Activated T-helper 1 cell treated with anti-CD3 and anti-CD28 coated beads, Interleukin-12 subunit alpha, Interleukin-12 subunit beta, Interleukin-2, Interleukin-4 antibody, amounts not matched to agents 30 ng/mL and 10 ng/mL and 1 ng/mL, durations not matched to agents 14 hours and 24 hours and 36 hours (primary cell): ENCODE measurements at regions of chr20 and their contacts with region 1.

Region 1: DNA sequence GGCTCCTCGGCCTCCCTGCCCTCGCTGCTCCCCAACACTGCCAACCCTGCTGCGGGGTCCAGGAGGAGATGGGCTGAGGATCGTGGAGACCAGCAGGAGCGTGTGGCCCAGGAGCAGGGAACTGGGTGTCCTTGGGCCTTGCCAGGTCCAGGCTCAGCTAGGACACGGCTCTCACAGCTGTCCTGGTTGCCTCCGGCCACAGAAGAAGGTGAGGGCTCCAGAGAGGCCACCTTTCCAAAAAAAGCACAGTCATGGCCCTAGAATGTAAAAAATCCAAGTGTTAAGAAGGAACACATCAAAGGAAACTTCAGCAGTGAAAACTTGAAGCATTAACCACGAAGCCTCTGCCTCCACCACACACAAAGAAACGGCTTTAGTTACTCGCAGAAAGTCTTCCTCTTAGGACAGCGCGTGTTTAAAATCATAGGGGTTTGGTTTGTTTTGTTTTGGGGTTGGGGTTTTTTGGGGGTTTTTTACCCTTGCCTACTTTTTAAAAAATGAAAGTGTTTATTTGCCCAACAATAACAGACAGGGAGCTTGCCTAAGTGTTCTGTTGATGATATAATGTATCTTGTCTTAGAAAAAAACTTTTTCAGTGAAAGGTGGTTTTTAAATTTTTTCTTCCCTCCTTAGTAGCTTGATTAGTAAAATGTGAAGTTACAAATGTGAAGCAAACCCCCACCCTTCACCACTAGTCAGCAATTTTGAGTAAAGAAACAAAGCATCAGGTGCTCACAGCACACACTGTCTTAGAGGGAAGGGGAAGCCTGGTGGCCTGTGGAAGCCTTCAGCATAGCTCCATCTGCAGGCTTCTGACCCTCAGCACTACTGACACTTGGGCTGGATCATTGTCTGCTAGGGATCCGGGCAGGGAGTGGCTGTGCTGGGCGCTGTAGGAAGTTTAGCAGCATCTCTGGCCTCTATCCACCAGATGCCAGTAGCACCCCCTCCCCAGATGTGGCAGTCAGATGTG is 60.0 kb downstream of the PTPN1 start:
- DNase-seq: peak; percentile 47
- H3K4me3 Mint-ChIP-seq: peak overlapping the region; percentile 51
- H3K27ac Mint-ChIP-seq: peak overlapping the region; percentile 87
- H3K4me1 Mint-ChIP-seq: peaks cover 69% of the 10 kb centered on the region
- H3K27me3 Mint-ChIP-seq: no peaks in the 10 kb centered on the region

Region 2: GRCh38 chr20:50478162-50479036 is 91.8 kb before region 1 on chr20:
- intact Hi-C with region 1: loop called (anchors 1 kb)
- DNase-seq: peak; percentile 74
- H3K4me3 Mint-ChIP-seq: no peak overlapping the region
- H3K27ac Mint-ChIP-seq: no peak overlapping the region
- H3K4me1 Mint-ChIP-seq: peaks cover 28% of the 10 kb centered on the region
- H3K27me3 Mint-ChIP-seq: peaks cover 2% of the 10 kb centered on the region

Region 3: DNA sequence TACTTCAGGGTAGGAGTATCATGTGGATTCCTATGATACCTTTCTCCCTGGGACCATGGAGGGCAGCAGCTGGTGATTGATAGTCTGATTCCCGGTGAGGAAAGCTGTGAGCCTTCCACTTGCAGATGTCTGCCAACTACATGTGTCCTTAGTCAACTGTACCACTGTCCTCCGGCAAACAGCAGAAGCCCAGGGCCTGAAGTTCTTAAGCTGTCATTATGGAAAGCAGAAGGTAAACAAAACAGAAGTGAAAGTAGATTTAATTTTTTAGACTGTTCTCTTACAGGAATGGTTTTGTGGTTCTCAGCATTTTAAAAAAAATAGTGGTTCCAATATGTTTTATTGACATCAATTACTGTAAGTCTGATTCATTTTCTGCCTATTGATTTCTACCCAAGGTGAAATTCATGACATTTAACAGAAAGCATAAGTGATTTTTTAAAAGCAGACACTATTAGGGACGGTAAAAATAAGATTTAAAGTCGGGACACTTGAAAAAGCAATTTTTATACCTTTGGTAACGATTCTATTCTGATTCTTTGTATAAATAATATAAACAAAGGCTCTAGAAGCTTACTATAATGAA is 23.3 kb before region 1 on chr20:
- intact Hi-C with region 1: loop called (anchors 1 kb)
- DNase-seq: no peak
- H3K4me3 Mint-ChIP-seq: peak overlapping the region; percentile 81
- H3K27ac Mint-ChIP-seq: peak overlapping the region; percentile 86
- H3K4me1 Mint-ChIP-seq: peaks cover 67% of the 10 kb centered on the region
- H3K27me3 Mint-ChIP-seq: no peaks in the 10 kb centered on the region

Region 4: DNA sequence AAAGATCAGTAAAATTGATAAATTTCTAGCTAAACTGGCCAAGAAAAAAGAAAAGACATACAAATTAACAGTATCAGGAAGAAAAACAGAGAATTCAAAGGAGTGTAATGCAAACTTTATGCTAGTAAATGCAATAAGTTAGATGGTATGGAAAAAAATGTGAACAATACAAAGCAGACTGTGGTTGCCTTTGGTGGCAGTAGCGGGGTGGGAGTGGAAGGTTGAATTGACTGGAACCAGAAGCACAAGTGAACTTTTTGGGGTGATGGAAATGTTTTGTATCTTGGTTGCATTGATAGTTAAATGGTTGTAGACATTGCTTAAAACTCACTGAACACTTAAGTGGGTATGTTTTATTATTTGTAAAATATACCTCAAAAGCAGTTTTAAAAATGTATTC is 15.0 kb before region 1 on chr20:
- intact Hi-C with region 1: loop called (anchors 2 kb)
- DNase-seq: no peak
- H3K4me3 Mint-ChIP-seq: no peak overlapping the region
- H3K27ac Mint-ChIP-seq: no peak overlapping the region
- H3K4me1 Mint-ChIP-seq: peaks cover 20% of the 10 kb centered on the region
- H3K27me3 Mint-ChIP-seq: no peaks in the 10 kb centered on the region